Activated T-helper 2 cell treated with anti-CD3 and anti-CD28 coated beads, Interferon-gamma antibody, Interleukin-2, Interleukin-4, amounts not matched to agents 10 μg/mL and 5 μg/mL and 100 μg/mL, durations not matched to agents 14 hours and 24 hours and 36 hours (primary cell): ENCODE measurements at regions of chr1 and their contacts with region 1.

Region 1: DNA sequence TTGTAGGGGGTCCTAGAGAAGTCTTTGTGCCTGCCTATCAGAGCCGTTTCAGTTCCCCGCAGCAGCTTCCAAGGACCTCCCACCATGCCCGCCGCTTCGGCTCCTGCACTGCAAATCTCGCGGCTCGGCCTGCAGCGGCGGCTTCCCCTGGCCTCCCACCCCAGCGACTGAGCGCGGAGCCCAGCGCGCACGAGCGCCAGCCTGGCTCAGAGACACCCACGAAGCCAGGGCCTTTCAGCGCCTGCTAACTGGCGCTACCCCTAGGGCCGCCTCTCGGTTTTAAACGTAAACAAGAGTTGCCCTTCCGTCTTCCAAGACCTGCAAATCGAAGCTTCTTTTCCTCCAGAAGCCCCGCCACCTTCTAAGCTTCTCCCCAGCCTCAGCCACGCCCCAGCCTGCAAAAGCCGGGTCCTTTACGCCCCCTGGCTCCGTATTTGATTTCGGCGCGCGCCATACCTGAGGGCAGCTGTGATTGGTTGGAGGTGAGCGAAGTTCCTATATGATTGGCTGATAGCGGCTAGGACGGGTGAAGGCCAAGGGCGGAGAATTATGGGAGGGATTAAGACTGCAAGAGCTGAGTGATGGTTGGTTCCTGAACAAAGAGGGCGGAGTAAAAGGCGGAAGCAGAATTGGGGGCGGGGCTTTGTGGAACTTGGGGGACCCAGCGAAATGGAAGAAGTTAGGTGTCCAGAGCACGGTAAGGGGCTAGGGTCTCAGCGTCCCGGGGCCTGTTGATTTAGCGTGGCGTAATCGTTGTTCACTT is at the start of gene TTF2:
- DNase-seq: peak; percentile 98
- H3K4me3 Mint-ChIP-seq: no peak within 1 kb of the TSS
- H3K27ac Mint-ChIP-seq: no peak within 1 kb of the TSS
- H3K4me1 Mint-ChIP-seq: peaks cover 54% of the 10 kb centered on the region
- H3K27me3 Mint-ChIP-seq: no peaks in the 10 kb centered on the region
- total RNA-seq, gene TTF2: 98.4 and 103 TPM in 2 replicates

Region 2: DNA sequence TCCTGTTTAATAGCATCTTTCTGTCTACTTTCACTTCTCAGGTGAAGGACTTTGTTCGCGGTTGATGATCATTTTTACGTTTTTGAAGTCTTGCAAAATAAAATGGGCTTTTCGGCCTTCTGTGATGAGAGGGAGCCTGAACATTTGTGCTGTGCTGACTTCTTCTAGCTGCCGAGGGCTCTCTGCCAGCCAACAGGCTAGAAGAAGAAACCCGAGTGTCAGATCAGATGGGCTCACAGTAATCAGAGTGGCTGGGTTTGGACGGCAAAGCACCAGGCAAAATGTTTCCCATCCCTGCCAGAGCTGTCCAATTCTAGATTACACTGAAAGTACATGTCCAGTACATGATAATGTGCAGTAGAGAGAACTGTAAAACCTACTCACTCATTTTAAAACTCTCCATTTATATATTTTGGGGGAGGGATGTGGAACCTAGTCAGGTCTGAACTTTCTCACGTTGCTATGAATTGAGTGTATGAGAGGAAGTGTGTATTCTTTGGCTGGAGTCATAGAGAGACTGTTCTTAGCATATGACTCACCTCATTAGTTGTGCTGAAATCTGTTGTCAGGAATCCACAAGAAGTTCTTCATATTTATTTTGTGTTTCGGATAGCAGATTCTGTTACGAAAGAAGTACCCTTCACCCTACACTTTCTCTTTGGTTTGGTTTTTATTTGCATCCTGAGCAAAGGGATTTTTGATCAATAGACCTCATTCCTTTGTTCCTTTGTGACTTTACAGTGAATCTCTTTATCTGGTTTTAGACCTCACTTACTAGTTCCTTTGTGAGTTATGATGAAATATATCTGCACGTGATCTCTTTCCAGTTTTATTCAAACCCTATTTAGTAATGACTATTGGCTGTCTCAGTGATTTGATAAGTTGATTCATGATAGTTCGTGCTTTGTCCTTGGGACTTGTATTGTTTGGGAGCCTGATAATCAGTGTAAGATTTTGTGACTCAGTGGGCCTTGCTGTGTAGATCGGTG is 682.0 kb before region 1 on chr1:
- intact Hi-C with region 1: loop called (anchors 1 kb)
- DNase-seq: peak; percentile 28
- H3K4me3 Mint-ChIP-seq: peak overlapping the region; percentile 78
- H3K27ac Mint-ChIP-seq: peak overlapping the region; percentile 75
- H3K4me1 Mint-ChIP-seq: peaks cover 66% of the 10 kb centered on the region
- H3K27me3 Mint-ChIP-seq: no peaks in the 10 kb centered on the region

Region 3: GRCh38 chr1:116667575-116668105 is 392.2 kb before region 1 on chr1 and contains the start of gene IGSF3:
- intact Hi-C with region 1: loop called (anchors 5 kb)
- DNase-seq: peak; percentile 47
- H3K4me3 Mint-ChIP-seq: peak within 1 kb of the TSS; percentile 78
- H3K27ac Mint-ChIP-seq: no peak within 1 kb of the TSS
- H3K4me1 Mint-ChIP-seq: peaks cover 13% of the 10 kb centered on the region
- H3K27me3 Mint-ChIP-seq: peaks cover 52% of the 10 kb centered on the region
- total RNA-seq, gene IGSF3: 4.6 and 4.9 TPM in 2 replicates

Region 4: GRCh38 chr1:116763787-116764465 is 295.9 kb before region 1 on chr1:
- intact Hi-C with region 1: loop called (anchors 1 kb)
- DNase-seq: no peak
- H3K4me3 Mint-ChIP-seq: peak overlapping the region; percentile 84
- H3K27ac Mint-ChIP-seq: peak overlapping the region; percentile 100
- H3K4me1 Mint-ChIP-seq: peaks cover 88% of the 10 kb centered on the region
- H3K27me3 Mint-ChIP-seq: no peaks in the 10 kb centered on the region

Region 5: DNA sequence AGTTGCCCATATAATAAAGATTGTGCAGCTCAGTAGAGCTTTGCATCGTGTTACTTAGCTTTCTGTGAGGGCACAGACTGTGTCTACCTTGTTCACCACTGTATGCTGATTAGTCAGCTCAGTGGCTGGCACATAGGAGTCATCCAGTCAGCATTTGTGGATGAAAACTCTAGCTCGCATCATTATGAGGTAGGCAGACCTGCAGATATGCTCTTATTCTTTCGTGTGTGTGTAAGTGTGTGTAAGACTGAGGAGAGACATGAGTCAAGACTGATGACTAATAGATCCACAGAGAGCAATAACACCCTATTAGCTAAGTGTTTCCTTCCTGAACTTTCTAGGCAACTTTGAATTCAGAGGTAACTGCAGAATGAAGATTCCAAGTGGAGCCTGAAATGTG is 17.4 kb after region 1 on chr1:
- intact Hi-C with region 1: loop called (anchors 1 kb)
- DNase-seq: no peak
- H3K4me3 Mint-ChIP-seq: no peak overlapping the region
- H3K27ac Mint-ChIP-seq: peak overlapping the region; percentile 70
- H3K4me1 Mint-ChIP-seq: peaks cover 19% of the 10 kb centered on the region
- H3K27me3 Mint-ChIP-seq: no peaks in the 10 kb centered on the region

Region 6: DNA sequence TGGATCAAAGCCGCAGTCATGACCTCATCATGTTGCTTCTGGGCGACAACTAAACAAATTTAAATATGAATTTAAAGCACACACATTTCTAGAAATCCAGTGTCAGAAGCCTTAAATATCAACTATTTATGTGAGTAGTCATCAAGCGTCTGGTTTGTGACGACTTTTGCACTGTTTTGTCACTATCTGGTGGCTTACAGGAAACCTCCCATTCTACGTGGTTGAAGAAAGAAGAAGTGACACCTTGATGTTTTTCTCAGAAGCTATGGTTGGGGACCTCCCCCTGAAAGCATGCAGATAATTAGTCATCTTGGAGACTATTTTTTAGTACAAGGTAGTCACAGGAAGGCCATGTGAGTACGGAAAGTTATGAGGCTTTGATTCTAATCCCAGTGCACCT is 604.5 kb after region 1 on chr1:
- intact Hi-C with region 1: loop called (anchors 5 kb)
- DNase-seq: peak; percentile 67
- H3K4me3 Mint-ChIP-seq: no peak overlapping the region
- H3K27ac Mint-ChIP-seq: peak overlapping the region; percentile 83
- H3K4me1 Mint-ChIP-seq: peaks cover 67% of the 10 kb centered on the region
- H3K27me3 Mint-ChIP-seq: no peaks in the 10 kb centered on the region